Spleen (tissue), 13 donors: ENCODE measurements at regions of chr1 and their contacts with region 1.

Region 1: GRCh38 chr1:198771563-198772153 is 132.8 kb downstream of the PTPRC start:
- DNase-seq: no peak
- H3K4me3 ChIP-seq: no peak overlapping the region
- H3K27ac ChIP-seq: no peak overlapping the region
- H3K4me1 ChIP-seq: peaks cover 0 to 19% (median 0%) of the 10 kb centered on the region in 6 donors
- H3K27me3 ChIP-seq: no peaks in the 10 kb centered on the region
- CTCF ChIP-seq: peak in 10 of 11 experiments; percentile 7 to 55 (median 34)
- POLR2A ChIP-seq: no peak

Region 2: GRCh38 chr1:198880818-198881597 is 109.3 kb after region 1 on chr1:
- intact Hi-C with region 1: no loop called
- DNase-seq: no peak
- H3K4me3 ChIP-seq: no peak overlapping the region
- H3K27ac ChIP-seq: peak overlapping the region in 3 of 8 donors; percentile 45 to 69 (median 53)
- H3K4me1 ChIP-seq: peaks cover 0 to 13% (median 0%) of the 10 kb centered on the region in 6 donors
- H3K27me3 ChIP-seq: no peaks in the 10 kb centered on the region
- CTCF ChIP-seq: no peak
- POLR2A ChIP-seq: no peak

Region 3: GRCh38 chr1:199243423-199244061 is 471.9 kb after region 1 on chr1:
- intact Hi-C with region 1: loop called (anchors 10 kb)
- DNase-seq: peak; percentile 91
- H3K4me3 ChIP-seq: no peak overlapping the region
- H3K27ac ChIP-seq: no peak overlapping the region
- H3K4me1 ChIP-seq: peaks cover 0 to 13% (median 0%) of the 10 kb centered on the region in 6 donors
- H3K27me3 ChIP-seq: no peaks in the 10 kb centered on the region
- CTCF ChIP-seq: peak; percentile 44 to 87 (median 65)
- POLR2A ChIP-seq: no peak